ENCODE measurements at regions of chr1 and their contacts with region 1.

Region 1: GRCh38 chr1:146012737-146013403 is 8.7 kb downstream of the HJV start:
- DNase-seq: peak; percentile 46 to 51
- H3K4me3 ChIP-seq: no peak overlapping the region
- H3K27ac ChIP-seq: no peak overlapping the region
- H3K4me1 ChIP-seq: peaks cover 15 to 25% of the 10 kb centered on the region in 2 donors
- H3K27me3 ChIP-seq: no peaks in the 10 kb centered on the region
- CTCF ChIP-seq: peak; percentile 40 to 91 (median 83)
- POLR2A ChIP-seq: no peak

Region 2: DNA sequence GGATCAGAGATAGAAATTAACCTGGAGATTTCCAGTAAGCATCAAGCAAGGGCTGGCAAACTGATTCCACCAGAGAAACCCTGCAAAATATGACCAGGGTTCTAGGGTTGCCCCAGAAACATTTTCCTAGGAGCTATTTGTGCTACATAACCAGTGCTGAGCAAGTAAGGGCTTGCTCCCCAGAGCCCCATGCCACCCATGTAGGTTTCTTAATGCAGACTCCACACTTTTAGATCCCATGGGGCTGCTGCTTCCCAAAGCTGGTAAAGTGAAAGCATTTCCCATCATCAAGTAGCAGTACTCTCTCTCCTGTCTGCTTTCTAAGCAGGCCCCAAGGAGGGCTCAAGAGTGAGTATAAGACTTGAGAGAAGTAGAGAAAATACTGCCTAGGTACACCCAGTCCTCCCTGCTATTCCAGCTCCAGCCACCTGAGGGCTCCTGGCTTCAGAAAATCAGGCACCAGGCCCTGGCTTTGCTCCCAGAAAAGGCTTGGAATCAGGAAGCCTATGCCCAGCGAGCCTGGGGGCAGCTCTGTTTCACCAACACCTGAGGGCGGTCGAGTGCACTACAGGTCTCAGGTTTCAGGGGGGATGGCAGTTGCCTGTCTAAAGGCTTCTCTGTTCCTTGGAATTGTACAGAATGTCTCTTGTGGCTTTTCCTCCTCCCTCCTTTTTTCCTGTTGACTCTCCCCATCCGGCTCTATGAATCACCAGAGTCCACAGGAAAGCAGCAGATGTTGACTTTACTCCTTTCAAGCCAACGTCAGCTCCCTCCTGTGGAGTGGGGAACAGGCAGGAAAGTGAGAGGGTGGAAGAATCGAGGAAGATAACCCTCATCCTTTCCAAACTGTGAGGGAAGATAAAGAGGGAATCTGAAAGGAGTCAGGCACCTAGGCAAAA is 121.0 kb before region 1 on chr1:
- intact Hi-C with region 1: loop called (anchors 5 kb)
- DNase-seq: peak; percentile 100
- H3K4me3 ChIP-seq: no peak overlapping the region
- H3K27ac ChIP-seq: peak overlapping the region; percentile 75 to 96 (median 91)
- H3K4me1 ChIP-seq: peaks cover 11 to 24% of the 10 kb centered on the region in 2 donors
- H3K27me3 ChIP-seq: no peaks in the 10 kb centered on the region
- CTCF ChIP-seq: peak; percentile 87 to 99 (median 97)
- POLR2A ChIP-seq: peak in 1 of 2 donors; percentile 71

Region 3: GRCh38 chr1:145963995-145964901 is 48.6 kb before region 1 on chr1 and contains the starts of genes ANKRD34A and POLR3GL:
- intact Hi-C with region 1: loop called (anchors 10 kb)
- DNase-seq: peak; percentile 99 to 100
- H3K4me3 ChIP-seq: peak within 1 kb of the TSS; percentile 15 to 57 (median 48)
- H3K27ac ChIP-seq: peak within 1 kb of the TSS; percentile 75 to 98 (median 87)
- H3K4me1 ChIP-seq: peaks cover 18 to 32% of the 10 kb centered on the region in 2 donors
- H3K27me3 ChIP-seq: no peaks in the 10 kb centered on the region
- CTCF ChIP-seq: no peak
- POLR2A ChIP-seq: peak in 1 of 2 donors; percentile 98
- total RNA-seq, gene ANKRD34A: 0.13 to 2.0 (median 0.97) TPM
- total RNA-seq, gene POLR3GL: 12.5 to 36.4 (median 22.7) TPM